ENCODE measurements at regions of chr19 and their contacts with region 1.

Region 1: GRCh38 chr19:15177269-15178116 is 23.3 kb downstream of the NOTCH3 start:
- DNase-seq: peak; percentile 72 to 99 (median 85)
- ATAC-seq: peak; percentile 87
- H3K4me3 ChIP-seq: no peak overlapping the region
- H3K27ac ChIP-seq: no peak overlapping the region
- H3K4me1 ChIP-seq: peaks cover 0 to 10% of the 10 kb centered on the region in 2 donors
- H3K27me3 ChIP-seq: peaks cover 0 to 19% of the 10 kb centered on the region in 2 donors
- CTCF ChIP-seq: peak; percentile 95 to 97

Region 2: GRCh38 chr19:15251749-15252397 is 74.4 kb after region 1 on chr19:
- intact Hi-C with region 1: loop called in 1 of 2 experiments (anchors 10 kb)
- DNase-seq: peak in 3 of 4 donors; percentile 70 to 94 (median 86)
- ATAC-seq: peak; percentile 58
- H3K4me3 ChIP-seq: no peak overlapping the region
- H3K27ac ChIP-seq: peak overlapping the region; percentile 56 to 78
- H3K4me1 ChIP-seq: peaks cover 20 to 45% of the 10 kb centered on the region in 2 donors
- H3K27me3 ChIP-seq: no peaks in the 10 kb centered on the region
- CTCF ChIP-seq: peak in 1 of 2 donors; percentile 30

Measured in left lung (tissue), 14 donors.